Activated T-helper 2 cell treated with anti-CD3 and anti-CD28 coated beads, Interferon-gamma antibody, Interleukin-2, Interleukin-4, amounts not matched to agents 10 μg/mL and 5 μg/mL and 100 μg/mL, durations not matched to agents 14 hours and 24 hours and 36 hours (primary cell): ENCODE measurements at regions of chr7 and their contacts with region 1.

Region 1: DNA sequence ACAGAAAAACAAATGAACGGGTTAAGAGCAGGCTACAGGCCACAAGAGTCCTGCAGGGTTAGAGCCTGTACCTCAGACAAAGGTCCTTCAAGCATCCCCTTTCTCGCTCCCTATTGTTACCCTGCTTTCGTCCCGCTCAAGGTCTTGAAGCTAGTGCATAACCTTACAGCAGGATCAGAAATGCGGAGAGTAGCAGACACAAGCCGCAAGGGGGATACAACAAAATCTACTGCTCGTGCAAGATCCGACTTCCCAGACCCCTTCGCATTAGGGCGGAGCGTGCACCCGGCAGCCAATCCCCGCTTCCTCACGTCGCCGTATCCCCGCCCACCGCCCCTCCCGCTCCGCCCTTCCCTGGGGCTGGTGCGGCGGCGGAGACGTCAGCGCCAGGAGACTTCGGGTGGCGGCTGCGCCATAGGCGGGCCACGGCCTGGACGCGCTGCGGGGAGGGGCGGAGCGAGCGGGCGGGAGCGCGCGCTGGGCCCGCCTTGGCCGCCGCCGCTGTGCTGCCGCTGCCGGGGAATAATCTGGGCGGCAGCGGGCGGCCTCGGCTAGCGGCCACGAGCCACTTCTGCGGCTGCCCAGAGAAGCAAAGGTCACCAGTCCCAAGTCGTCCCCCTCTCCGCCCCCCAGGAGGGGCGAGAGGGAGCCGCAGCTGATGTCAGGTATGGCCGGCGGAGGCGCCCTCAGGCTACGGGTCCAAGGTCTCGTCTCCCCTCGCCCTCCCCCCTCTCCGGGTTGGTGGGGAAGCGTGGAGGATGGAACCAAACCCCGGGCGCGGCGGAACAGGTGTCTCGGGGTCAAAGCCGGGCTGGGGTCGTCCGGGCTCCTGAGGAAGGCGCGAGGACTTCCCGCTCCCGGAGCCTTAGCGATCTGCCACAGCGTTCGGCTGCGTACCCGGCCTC is at the start of gene C1GALT1:
- DNase-seq: peak; percentile 95
- H3K4me3 Mint-ChIP-seq: peak within 1 kb of the TSS; percentile 95
- H3K27ac Mint-ChIP-seq: peak within 1 kb of the TSS; percentile 99
- H3K4me1 Mint-ChIP-seq: peaks cover 22% of the 10 kb centered on the region
- H3K27me3 Mint-ChIP-seq: no peaks in the 10 kb centered on the region
- total RNA-seq, gene C1GALT1: 37.1 and 37.6 TPM in 2 replicates

Region 2: DNA sequence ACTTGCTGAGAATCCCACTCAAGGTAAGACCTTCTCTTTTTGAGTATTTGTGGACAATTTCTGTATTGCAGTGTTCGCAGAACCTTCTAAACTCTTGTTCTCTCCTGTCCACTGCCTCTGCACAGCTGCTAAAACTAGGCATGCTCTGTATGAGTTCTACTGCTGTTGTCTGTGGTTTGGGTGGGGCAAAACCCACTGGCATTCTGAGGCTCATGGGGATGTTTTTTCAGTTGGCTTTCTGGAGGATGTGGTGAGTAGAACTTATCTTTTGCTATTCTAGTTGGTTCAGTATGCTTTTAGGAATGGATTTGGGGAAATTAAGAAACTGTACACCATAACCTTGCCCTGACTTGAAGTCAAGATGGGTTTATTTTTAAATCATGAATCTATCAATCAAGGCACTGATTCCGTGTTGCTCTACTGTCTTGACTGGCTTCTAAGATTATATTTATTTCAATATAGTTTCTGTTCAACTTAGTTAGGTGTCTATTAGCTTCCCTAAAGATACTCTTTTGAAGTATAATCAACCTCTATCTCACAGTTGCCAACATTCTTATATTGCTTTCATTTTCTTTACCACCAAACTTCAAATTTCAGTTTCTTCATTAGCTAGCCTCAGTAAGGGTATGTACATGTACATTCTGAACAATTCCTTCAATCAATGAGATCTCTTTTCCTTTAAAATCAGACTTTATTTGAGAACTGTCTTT is 25.1 kb before region 1 on chr7:
- intact Hi-C with region 1: loop called (anchors 1 kb)
- DNase-seq: peak; percentile 72
- H3K4me3 Mint-ChIP-seq: peak overlapping the region; percentile 79
- H3K27ac Mint-ChIP-seq: peak overlapping the region; percentile 80
- H3K4me1 Mint-ChIP-seq: peaks cover 49% of the 10 kb centered on the region
- H3K27me3 Mint-ChIP-seq: no peaks in the 10 kb centered on the region

Region 3: DNA sequence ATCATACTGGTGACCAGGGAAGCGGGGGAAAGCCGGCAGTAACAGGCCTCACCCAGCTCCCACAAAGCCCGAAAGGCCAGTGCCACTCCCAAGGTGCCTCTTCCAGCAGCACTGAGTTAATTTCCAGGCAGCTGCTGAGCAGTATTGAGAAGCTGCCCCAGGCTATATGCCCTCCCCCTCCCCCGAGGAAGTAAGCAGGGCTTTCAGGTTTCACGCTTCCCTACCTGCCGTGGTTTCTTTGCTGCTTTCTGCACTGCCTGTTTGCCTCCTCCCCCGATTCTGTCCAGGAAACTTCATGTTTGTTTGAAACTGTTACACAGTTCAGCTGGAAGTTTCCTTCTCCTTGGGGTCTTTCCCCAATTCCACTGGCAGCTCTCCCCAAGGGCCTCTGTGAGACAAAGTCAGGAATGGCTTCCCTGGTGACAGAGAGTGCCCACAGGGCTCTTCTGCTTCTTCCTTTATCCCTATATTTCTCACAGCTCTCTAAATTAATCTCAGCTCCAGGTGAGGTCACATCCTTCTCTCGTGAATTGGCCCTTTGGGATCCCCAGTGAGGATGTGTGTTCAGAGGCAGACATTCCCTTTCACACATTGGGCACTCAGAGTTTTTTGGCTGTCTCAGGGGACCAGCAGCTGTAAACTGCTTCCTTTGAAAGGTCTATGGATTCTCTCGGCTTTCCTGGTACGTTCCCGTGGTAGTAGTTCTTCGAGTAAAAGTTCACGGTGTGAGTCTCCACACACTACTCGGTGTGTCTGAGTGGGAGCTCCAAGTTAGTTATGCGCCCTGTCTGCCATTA is 19.4 kb after region 1 on chr7:
- intact Hi-C with region 1: loop called (anchors 2 kb)
- DNase-seq: peak; percentile 25
- H3K4me3 Mint-ChIP-seq: peak overlapping the region; percentile 51
- H3K27ac Mint-ChIP-seq: peak overlapping the region; percentile 63
- H3K4me1 Mint-ChIP-seq: peaks cover 64% of the 10 kb centered on the region
- H3K27me3 Mint-ChIP-seq: no peaks in the 10 kb centered on the region

Region 4: DNA sequence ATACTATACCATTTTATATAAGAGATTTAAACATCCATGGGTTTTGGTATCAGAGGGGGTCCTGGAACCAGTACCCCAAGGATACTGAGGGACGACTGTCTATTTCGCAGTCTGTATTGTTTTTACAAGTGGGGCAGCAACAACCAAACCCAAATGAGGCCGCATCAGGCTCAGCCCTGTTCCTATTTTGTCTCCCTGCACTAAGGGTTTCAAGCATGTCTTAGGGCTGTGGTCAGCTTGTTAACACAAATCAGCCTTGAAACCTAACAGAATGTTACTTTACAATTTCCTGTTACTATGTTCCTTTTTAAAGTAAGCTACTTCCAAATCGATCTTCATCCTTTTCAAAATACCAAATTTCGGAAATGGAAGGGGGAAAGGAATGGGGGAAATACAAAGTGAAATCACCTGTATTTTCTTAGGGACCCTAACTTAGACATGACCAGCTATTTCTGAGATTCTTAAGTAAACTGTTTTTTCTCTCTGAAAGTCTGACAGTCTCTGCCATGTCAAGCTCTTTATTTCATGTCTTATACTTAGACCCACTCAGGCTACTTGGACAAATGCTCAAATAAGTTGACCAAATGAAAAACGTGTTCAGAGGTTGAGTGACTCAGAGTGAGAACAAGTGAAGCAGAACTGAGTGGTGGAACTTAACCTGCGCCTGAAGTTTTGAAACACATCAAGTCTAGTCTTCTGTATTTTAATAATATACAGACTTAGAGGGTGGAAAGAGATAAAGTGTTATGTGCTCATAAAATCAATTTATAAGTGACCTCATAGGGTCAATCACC is 75.7 kb after region 1 on chr7:
- intact Hi-C with region 1: loop called (anchors 1 kb)
- DNase-seq: no peak
- H3K4me3 Mint-ChIP-seq: peak overlapping the region; percentile 70
- H3K27ac Mint-ChIP-seq: peak overlapping the region; percentile 86
- H3K4me1 Mint-ChIP-seq: peaks cover 48% of the 10 kb centered on the region
- H3K27me3 Mint-ChIP-seq: no peaks in the 10 kb centered on the region

Region 5: DNA sequence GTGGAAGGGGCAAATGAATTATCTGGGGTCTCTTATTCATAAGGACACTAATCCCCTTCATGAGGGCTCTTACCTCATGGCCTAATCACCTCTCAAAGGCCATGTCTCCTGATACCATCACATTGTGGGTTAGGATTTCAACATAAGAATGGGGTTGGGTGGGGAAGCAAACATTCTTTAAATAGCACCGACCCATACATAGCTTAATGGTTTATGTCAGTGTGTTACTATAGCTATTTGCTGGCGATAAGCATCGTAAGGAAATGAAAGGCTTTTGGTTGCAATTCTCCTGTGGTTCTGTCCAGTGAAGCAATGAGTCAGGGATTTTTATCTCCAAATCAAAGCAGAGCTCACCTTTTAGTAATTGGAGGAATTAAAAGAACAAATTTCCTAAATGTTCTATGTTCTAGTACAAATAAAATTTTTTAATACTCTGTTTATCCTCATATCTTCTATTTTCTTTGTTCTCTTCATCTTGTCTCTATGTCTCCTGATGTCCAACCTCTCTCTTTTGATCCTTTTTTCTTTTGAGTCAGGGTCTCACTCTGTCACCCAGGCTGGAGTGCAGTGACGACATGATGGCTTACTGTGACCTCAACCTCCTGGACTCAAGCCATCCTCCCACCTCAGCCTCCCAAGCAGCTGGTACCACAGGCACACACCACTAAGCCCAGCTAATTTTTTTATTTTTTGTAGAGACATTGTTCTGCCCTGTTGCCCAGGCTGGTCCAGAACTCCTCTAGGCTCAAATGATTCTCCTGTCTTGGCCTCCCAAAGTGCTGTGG is 729.2 kb after region 1 on chr7:
- intact Hi-C with region 1: no loop called
- DNase-seq: no peak
- H3K4me3 Mint-ChIP-seq: no peak overlapping the region
- H3K27ac Mint-ChIP-seq: no peak overlapping the region
- H3K4me1 Mint-ChIP-seq: peaks cover 4% of the 10 kb centered on the region
- H3K27me3 Mint-ChIP-seq: no peaks in the 10 kb centered on the region

Region 6: DNA sequence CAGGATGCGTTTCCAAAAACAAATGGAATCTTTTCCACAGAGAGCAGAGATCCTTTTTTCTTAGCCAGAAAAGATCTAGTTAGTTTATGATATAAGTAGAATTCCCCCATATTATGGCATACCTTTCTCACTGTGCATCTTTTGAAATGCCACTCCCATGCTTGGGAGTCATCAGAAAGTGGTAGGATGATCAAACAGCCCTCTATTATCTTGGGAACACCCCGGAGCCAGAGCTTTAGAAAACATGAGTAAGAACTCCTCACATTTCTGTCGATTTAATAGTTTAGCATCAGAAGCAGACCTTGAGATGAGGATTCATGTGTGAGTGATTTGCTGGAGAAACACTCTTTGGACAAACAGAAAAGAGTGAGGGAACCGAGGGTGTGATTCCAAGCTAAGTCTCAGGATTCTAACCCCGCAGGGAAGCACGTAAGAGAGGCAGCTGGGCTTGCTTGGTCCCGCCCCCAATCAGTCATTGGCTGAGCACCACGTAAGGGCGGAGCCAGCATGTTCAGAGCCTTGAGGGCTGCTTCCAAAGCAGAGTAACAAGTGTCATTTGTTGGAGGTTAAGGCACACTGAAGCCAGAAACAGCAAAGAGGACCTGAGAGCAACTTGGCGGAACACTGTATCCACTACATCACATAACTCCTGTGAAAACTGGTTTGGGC is 1207.3 kb after region 1 on chr7:
- intact Hi-C with region 1: no loop called
- DNase-seq: no peak
- H3K4me3 Mint-ChIP-seq: no peak overlapping the region
- H3K27ac Mint-ChIP-seq: no peak overlapping the region
- H3K4me1 Mint-ChIP-seq: peaks cover 13% of the 10 kb centered on the region
- H3K27me3 Mint-ChIP-seq: peaks cover 26% of the 10 kb centered on the region